ENCODE measurements at regions of chr1 and their contacts with region 1.

Region 1: DNA sequence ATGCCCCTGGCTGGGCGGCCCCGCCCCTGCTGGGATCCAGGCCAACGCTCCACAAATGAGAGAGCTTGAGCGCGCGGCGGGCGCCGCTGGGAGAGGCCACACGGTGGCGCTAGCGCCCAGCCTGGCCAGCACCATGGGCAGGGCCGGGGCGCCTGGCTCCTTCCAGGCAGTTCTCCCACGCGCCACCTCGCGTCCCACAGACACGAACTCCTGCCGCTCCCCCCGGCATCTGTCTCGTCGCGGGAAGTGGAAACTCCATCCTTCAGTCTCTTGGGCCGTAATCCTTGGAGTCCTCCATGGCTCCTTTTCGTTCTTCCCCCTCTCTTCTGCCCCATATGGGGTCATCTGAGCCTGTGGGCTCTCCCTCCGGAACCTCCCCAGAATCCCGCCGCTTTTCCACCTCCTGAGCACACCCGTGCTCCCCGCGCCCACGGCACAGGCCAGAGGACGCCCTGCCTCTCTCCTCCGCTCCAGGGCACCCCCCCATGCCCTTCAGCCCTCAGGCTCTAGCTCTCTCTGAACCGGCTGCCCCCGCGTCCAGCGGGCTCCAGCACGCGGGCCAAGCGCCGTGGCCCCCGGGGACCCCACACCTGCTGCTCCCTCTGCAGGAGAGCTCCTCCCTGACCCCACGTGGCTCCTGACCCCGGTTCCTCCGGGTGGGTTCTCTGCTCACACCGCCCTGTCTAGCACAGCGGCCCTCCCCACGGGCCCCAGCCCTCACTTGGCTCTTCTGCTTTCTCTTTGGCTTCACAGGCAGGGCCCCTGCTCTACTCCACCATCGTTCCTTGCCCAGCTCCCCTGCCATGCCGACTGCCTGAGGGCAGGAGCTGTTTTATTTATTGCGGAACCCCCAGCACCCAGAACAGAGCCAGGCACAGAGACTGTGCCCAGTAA is 31.9 kb upstream of the EDN2 start:
- DNase-seq: peak; percentile 89 to 94 (median 92)
- ATAC-seq: peak; percentile 90 to 95 (median 94)
- H3K4me3 ChIP-seq: peak overlapping the region in 11 of 12 donors; percentile 32 to 59 (median 53)
- H3K27ac ChIP-seq: peak overlapping the region in 6 of 12 donors; percentile 23 to 63 (median 46)
- H3K4me1 ChIP-seq: peaks cover 0 to 33% (median 17%) of the 10 kb centered on the region in 12 donors
- H3K27me3 ChIP-seq: no peaks in the 10 kb centered on the region
- CTCF ChIP-seq: peak; percentile 86 to 98 (median 94)
- POLR2A ChIP-seq: peak in 1 of 2 donors; percentile 22

Region 2: GRCh38 chr1:41268154-41268770 is 248.2 kb before region 1 on chr1:
- intact Hi-C with region 1: loop called in 2 of 10 experiments (anchors 2 to 5 kb)
- DNase-seq: peak; percentile 69 to 84 (median 73)
- ATAC-seq: peak; percentile 42 to 85 (median 76)
- H3K4me3 ChIP-seq: no peak overlapping the region
- H3K27ac ChIP-seq: no peak overlapping the region
- H3K4me1 ChIP-seq: peaks cover 0 to 5% (median 0%) of the 10 kb centered on the region in 12 donors
- H3K27me3 ChIP-seq: no peaks in the 10 kb centered on the region
- CTCF ChIP-seq: peak; percentile 94 to 99 (median 98)
- POLR2A ChIP-seq: no peak

Region 3: DNA sequence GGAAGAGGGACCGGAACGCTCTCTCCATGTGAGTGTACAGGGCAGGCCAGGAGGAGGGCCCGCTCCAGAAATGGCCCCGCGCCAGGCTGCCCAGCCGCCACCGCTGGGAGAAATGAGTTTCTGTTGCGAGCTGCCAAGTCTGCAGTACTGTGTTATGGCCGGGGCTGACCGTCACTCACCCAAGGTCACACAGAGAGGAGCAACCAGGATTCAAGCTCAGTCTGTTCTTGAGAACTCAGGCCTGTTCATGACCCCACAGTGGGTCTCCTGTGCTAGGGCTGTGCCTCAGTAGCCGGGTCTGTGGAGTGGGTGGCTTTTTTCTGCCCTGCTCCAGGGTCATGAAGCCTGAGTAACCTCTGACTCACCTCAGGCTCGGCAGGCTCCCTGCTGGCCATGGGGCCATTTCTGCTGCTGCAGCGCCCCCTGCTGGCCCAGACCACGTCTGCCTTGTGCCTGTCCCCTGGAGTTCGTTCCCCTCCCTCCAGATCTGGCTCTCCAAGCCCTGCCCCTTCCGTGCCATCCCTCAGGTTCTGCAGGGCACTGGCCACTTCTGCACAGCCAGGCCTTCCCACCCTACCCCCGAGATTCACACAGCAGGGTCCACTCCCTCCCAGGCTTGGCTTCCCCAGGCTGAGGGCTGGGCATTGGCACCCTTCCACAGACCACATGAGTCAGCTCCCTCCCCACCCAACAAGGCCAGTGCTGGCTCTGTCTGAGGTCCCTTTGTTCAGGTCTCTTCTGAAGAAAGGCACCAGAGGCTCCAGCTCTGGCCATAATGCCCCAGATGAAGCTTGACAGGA is 83.7 kb before region 1 on chr1:
- intact Hi-C with region 1: no loop called
- DNase-seq: peak; percentile 83 to 93 (median 92)
- ATAC-seq: peak; percentile 85 to 92 (median 90)
- H3K4me3 ChIP-seq: peak overlapping the region in 1 of 12 donors; percentile 12
- H3K27ac ChIP-seq: peak overlapping the region; percentile 29 to 90 (median 79)
- H3K4me1 ChIP-seq: peaks cover 5 to 41% (median 22%) of the 10 kb centered on the region in 12 donors
- H3K27me3 ChIP-seq: peaks cover 0 to 11% (median 0%) of the 10 kb centered on the region in 9 donors
- CTCF ChIP-seq: peak; percentile 81 to 97 (median 90)
- POLR2A ChIP-seq: no peak

Region 4: GRCh38 chr1:41558761-41559171 is 42.4 kb after region 1 on chr1:
- intact Hi-C with region 1: loop called in 1 of 10 experiments (anchors 5 kb)
- DNase-seq: peak; percentile 71 to 93 (median 81)
- ATAC-seq: peak; percentile 96 to 99 (median 97)
- H3K4me3 ChIP-seq: no peak overlapping the region
- H3K27ac ChIP-seq: peak overlapping the region in 8 of 12 donors; percentile 13 to 80 (median 50)
- H3K4me1 ChIP-seq: peaks cover 0 to 19% (median 7%) of the 10 kb centered on the region in 12 donors
- H3K27me3 ChIP-seq: no peaks in the 10 kb centered on the region
- CTCF ChIP-seq: peak in 1 of 12 donors; percentile 8
- POLR2A ChIP-seq: no peak